CD4-positive, alpha-beta memory T cell (primary cell): ENCODE measurements at regions of chrX and their contacts with region 1.

Region 1: GRCh38 chrX:15143050-15143824 is 126.6 kb downstream of the ASB9 start:
- DNase-seq: peak; percentile 31 to 50 (median 37)
- H3K4me3 ChIP-seq: no peak overlapping the region
- H3K4me3 Mint-ChIP-seq: peak overlapping the region in 6 of 8 donors; percentile 13 to 74 (median 32)
- H3K27ac ChIP-seq: no peak overlapping the region
- H3K27ac Mint-ChIP-seq: peak overlapping the region in 4 of 7 donors; percentile 11 to 80 (median 66)
- H3K4me1 ChIP-seq: peaks cover 11% of the 10 kb centered on the region
- H3K4me1 Mint-ChIP-seq: peaks cover 12 to 17% (median 15%) of the 10 kb centered on the region in 4 donors
- H3K27me3 ChIP-seq: no peaks in the 10 kb centered on the region
- H3K27me3 Mint-ChIP-seq: no peaks in the 10 kb centered on the region

Region 2: GRCh38 chrX:14039344-14039743 is 1103.9 kb before region 1 on chrX:
- CTCF ChIA-PET with region 1: interaction called, 45 read pairs
- POLR2A ChIA-PET with region 1: no interaction called
- intact Hi-C with region 1: loop called (anchors 1 kb)
- DNase-seq: peak; percentile 59 to 68 (median 65)
- H3K4me3 ChIP-seq: no peak overlapping the region
- H3K4me3 Mint-ChIP-seq: no peak overlapping the region
- H3K27ac ChIP-seq: no peak overlapping the region
- H3K27ac Mint-ChIP-seq: no peak overlapping the region
- H3K4me1 ChIP-seq: no peaks in the 10 kb centered on the region
- H3K4me1 Mint-ChIP-seq: no peaks in the 10 kb centered on the region
- H3K27me3 ChIP-seq: no peaks in the 10 kb centered on the region
- H3K27me3 Mint-ChIP-seq: peaks cover 0 to 2% of the 10 kb centered on the region in 2 donors

Region 3: DNA sequence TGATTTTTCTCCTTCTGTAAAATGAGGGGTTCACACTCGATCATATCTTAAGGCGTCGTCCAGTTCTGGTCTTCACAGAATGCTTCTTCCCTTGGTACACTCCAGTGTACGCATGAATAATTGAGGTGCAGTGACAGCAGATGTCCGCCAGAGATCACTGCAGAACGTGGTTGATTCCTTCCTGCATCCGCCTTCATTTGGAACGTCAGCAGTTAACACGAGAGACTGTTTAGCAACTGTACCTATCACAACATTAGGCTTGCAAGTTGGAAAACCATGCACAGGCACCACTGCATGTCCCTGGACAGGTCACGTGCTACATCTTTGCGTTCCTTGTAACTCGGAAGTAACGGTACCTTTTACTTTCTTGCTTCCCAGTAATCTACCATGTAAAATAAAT is 1047.5 kb before region 1 on chrX:
- CTCF ChIA-PET with region 1: interaction called, 15 read pairs
- POLR2A ChIA-PET with region 1: no interaction called
- intact Hi-C with region 1: loop called (anchors 1 kb)
- DNase-seq: peak; percentile 37 to 43 (median 40)
- H3K4me3 ChIP-seq: no peak overlapping the region
- H3K4me3 Mint-ChIP-seq: peak overlapping the region in 5 of 8 donors; percentile 17 to 62 (median 37)
- H3K27ac ChIP-seq: no peak overlapping the region
- H3K27ac Mint-ChIP-seq: no peak overlapping the region
- H3K4me1 ChIP-seq: no peaks in the 10 kb centered on the region
- H3K4me1 Mint-ChIP-seq: peaks cover 0 to 6% (median 0%) of the 10 kb centered on the region in 4 donors
- H3K27me3 ChIP-seq: no peaks in the 10 kb centered on the region
- H3K27me3 Mint-ChIP-seq: peaks cover 0 to under 1% of the 10 kb centered on the region in 2 donors

Region 4: GRCh38 chrX:14922437-14922836 is 220.8 kb before region 1 on chrX:
- CTCF ChIA-PET with region 1: no interaction called
- POLR2A ChIA-PET with region 1: no interaction called
- intact Hi-C with region 1: no loop called
- DNase-seq: no peak
- H3K4me3 ChIP-seq: no peak overlapping the region
- H3K4me3 Mint-ChIP-seq: no peak overlapping the region
- H3K27ac ChIP-seq: no peak overlapping the region
- H3K27ac Mint-ChIP-seq: no peak overlapping the region
- H3K4me1 ChIP-seq: no peaks in the 10 kb centered on the region
- H3K4me1 Mint-ChIP-seq: no peaks in the 10 kb centered on the region
- H3K27me3 ChIP-seq: no peaks in the 10 kb centered on the region
- H3K27me3 Mint-ChIP-seq: no peaks in the 10 kb centered on the region

Region 5: DNA sequence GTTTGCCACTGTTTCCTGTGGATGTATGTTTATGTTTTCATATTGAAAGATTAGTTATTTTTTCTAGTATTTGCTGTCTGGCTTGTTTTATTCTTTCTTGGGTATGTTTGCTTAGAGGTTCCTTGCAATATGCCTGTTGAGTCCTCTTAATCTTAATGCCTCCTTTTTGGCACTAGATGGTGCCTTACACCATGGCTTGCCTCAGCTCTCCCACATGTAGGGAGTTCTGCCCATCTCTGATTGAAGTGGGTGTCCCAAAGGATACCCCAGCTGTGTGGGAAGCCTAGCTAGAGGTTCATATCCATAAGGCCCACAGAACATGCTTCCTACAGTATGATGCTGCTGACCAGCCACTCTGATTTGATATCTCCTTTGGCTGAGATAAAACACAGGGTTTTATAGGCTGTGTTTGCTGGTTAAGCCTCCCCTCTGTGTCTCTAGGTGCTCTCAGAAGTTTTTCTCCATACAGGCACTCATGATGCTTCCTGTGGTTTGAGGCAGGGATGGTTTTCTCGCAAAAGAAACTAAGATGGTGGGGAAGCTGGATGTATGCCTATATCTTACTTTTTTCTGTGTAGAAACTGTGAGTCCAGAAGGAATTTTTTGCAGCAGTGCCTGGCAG is 35.8 kb before region 1 on chrX:
- CTCF ChIA-PET with region 1: interaction called, 3 read pairs
- POLR2A ChIA-PET with region 1: no interaction called
- intact Hi-C with region 1: loop called (anchors 1 kb)
- DNase-seq: peak in 2 of 5 donors; percentile 10 to 16
- H3K4me3 ChIP-seq: no peak overlapping the region
- H3K4me3 Mint-ChIP-seq: peak overlapping the region in 1 of 8 donors; percentile 32
- H3K27ac ChIP-seq: no peak overlapping the region
- H3K27ac Mint-ChIP-seq: no peak overlapping the region
- H3K4me1 ChIP-seq: peaks cover 11% of the 10 kb centered on the region
- H3K4me1 Mint-ChIP-seq: peaks cover 8 to 16% (median 15%) of the 10 kb centered on the region in 4 donors
- H3K27me3 ChIP-seq: no peaks in the 10 kb centered on the region
- H3K27me3 Mint-ChIP-seq: no peaks in the 10 kb centered on the region

Region 6: GRCh38 chrX:15242899-15243555 is 99.8 kb after region 1 on chrX:
- CTCF ChIA-PET with region 1: interaction called, 7 read pairs
- POLR2A ChIA-PET with region 1: no interaction called
- intact Hi-C with region 1: loop called (anchors 1 kb)
- DNase-seq: peak in 4 of 5 donors; percentile 21 to 41 (median 34)
- H3K4me3 ChIP-seq: no peak overlapping the region
- H3K4me3 Mint-ChIP-seq: no peak overlapping the region
- H3K27ac ChIP-seq: no peak overlapping the region
- H3K27ac Mint-ChIP-seq: no peak overlapping the region
- H3K4me1 ChIP-seq: no peaks in the 10 kb centered on the region
- H3K4me1 Mint-ChIP-seq: peaks cover 0 to 8% (median 2%) of the 10 kb centered on the region in 4 donors
- H3K27me3 ChIP-seq: no peaks in the 10 kb centered on the region
- H3K27me3 Mint-ChIP-seq: no peaks in the 10 kb centered on the region